ENCODE measurements at regions of chr5 and their contacts with region 1.

Region 1: GRCh38 chr5:172223901-172224873 is 30.2 kb downstream of the EFCAB9 start:
- DNase-seq: peak; percentile 95
- ATAC-seq: peak; percentile 90
- H3K4me3 ChIP-seq: 0 out of 2 replicates have a peak overlapping the region, but pooled peaks have one; percentile 5
- H3K27ac ChIP-seq: peak overlapping the region; percentile 94
- H3K4me1 ChIP-seq: peaks cover 25% of the 10 kb centered on the region
- H3K27me3 ChIP-seq: no peaks in the 10 kb centered on the region
- CTCF ChIP-seq: no peak
- EP300 ChIP-seq: no peak
- POLR2A ChIP-seq: no peak
- RAD21 ChIP-seq: no peak

Region 2: DNA sequence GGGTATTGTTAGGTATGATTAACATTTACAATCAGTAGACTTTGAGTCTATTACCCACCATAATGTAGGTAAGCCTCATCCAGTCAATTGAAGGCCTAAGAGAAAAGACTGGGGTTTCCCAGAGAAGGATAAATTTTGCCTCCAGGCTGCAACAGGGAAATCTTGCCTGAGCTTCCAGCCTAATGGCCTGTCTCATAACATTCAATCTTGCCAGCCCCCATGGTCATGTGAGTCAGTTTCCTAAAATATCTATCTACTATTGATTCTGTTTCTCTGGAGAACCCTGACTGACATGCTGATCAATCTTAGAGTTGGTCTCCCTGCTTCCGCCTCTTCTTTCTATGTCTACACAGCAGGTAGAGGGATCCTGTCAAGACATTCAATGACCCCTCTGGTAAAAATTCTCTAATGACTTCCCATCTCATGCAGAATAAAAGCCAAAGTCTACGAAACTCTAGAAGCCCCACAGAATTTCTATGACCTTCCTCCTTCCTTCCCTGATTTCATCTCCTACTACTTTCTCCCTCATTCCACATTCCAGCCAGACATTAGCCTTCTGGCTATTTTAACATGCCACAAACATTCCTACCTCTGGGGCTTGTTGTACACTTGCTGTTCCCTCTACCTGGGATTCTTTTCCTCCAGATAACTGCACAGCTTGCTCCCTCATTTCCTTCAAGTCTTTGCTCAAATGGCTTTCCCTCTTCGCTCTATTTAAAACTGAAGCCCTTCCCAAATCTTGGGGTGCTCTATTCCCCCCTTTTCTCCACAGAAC is 278.0 kb before region 1 on chr5:
- CTCF ChIA-PET with region 1: no interaction called
- POLR2A ChIA-PET with region 1: no interaction called
- RAD21 ChIA-PET with region 1: no interaction called
- SMC1A ChIA-PET with region 1: no interaction called
- in situ Hi-C with region 1: no loop called
- intact Hi-C with region 1: no loop called
- DNase-seq: no peak
- ATAC-seq: no peak
- H3K4me3 ChIP-seq: no peak overlapping the region
- H3K27ac ChIP-seq: no peak overlapping the region
- H3K4me1 ChIP-seq: peaks cover 6% of the 10 kb centered on the region; the same call in 1 of the 2 replicates
- H3K27me3 ChIP-seq: no peaks in the 10 kb centered on the region
- CTCF ChIP-seq: no peak
- EP300 ChIP-seq: no peak
- POLR2A ChIP-seq: no peak
- RAD21 ChIP-seq: no peak

Region 3: DNA sequence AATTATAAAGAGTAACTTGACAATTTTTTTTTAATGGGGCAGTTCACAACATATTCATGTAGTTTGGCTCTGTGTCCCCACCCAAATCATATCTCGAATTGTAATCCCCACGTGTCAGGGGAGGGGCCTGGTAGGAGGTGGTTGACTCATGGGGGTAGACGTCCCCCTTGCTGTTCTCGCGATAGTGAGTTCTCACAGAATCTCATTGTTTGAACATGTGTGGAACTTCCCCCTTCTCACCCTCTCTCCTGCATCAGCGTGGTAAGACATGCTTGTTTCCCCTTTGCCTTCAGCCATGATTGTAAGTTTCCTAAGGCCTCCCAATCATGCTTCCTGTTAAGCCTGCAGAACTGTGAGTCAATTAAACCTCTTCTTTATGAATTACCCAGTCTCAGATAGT is 258.4 kb before region 1 on chr5:
- CTCF ChIA-PET with region 1: no interaction called
- POLR2A ChIA-PET with region 1: no interaction called
- RAD21 ChIA-PET with region 1: no interaction called
- SMC1A ChIA-PET with region 1: no interaction called
- in situ Hi-C with region 1: no loop called
- intact Hi-C with region 1: no loop called
- DNase-seq: no peak
- ATAC-seq: 0 out of 3 replicates have a peak, but pooled peaks have one; percentile 4
- H3K4me3 ChIP-seq: no peak overlapping the region
- H3K27ac ChIP-seq: 0 out of 2 replicates have a peak overlapping the region, but pooled peaks have one; percentile 20
- H3K4me1 ChIP-seq: peaks cover 29% of the 10 kb centered on the region
- H3K27me3 ChIP-seq: no peaks in the 10 kb centered on the region
- CTCF ChIP-seq: no peak
- EP300 ChIP-seq: no peak
- POLR2A ChIP-seq: no peak
- RAD21 ChIP-seq: no peak

Region 4: GRCh38 chr5:172199446-172199845 is 24.7 kb before region 1 on chr5:
- CTCF ChIA-PET with region 1: no interaction called
- POLR2A ChIA-PET with region 1: interaction called, 10 read pairs
- RAD21 ChIA-PET with region 1: no interaction called
- SMC1A ChIA-PET with region 1: interaction called, 3 read pairs
- in situ Hi-C with region 1: no loop called
- intact Hi-C with region 1: no loop called
- DNase-seq: no peak
- ATAC-seq: no peak
- H3K4me3 ChIP-seq: no peak overlapping the region
- H3K27ac ChIP-seq: no peak overlapping the region
- H3K4me1 ChIP-seq: no peaks in the 10 kb centered on the region; the same call in 1 of the 2 replicates
- H3K27me3 ChIP-seq: no peaks in the 10 kb centered on the region
- CTCF ChIP-seq: no peak
- EP300 ChIP-seq: no peak
- POLR2A ChIP-seq: no peak
- RAD21 ChIP-seq: no peak

Region 5: DNA sequence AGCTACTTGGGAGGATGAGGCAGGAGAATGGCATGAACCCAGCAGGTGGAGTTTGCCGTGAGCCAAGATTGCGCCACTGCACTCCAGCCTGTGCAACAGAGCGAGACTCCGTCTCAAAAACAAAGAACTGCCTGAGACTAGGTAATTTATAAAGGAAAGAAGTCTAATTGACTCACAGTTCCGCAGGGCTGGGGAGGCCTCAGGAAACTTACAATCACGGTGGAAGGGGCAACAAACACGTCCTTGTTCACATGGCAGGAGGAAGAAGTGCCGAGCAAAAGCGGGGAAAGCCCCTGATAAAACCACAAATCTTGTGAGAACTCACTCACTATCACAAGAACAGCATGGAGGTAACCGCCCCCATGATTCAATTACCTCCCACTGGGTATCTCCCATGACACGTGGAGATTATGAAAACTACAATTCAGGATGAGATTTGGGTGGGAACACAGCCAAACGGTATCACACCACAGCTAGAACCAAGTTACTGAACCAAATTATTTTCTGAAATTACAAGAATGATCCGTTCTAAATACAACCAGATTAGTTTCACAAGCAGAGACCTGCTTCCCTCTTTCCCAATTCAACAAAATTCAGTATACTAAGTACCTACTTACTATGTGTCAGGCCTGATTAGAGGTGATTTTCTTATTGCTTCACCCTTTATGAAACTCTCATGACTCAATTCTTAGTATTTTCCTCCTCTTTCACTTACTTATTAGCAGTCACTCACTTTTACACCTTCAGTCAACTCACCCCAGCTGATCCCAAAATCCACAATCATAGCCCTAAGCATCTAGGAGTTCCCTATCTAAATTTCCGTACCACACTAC is 51.0 kb after region 1 on chr5:
- CTCF ChIA-PET with region 1: interaction called, 3 read pairs
- POLR2A ChIA-PET with region 1: no interaction called
- RAD21 ChIA-PET with region 1: no interaction called
- SMC1A ChIA-PET with region 1: interaction called, 3 read pairs
- in situ Hi-C with region 1: no loop called
- intact Hi-C with region 1: loop called (anchors 2 kb)
- DNase-seq: peak; percentile 55
- ATAC-seq: peak; percentile 79
- H3K4me3 ChIP-seq: peak overlapping the region; percentile 49; the same call in 1 of the 2 replicates
- H3K27ac ChIP-seq: peak overlapping the region; percentile 66
- H3K4me1 ChIP-seq: peaks cover 17% of the 10 kb centered on the region
- H3K27me3 ChIP-seq: no peaks in the 10 kb centered on the region
- CTCF ChIP-seq: no peak
- EP300 ChIP-seq: no peak
- POLR2A ChIP-seq: no peak
- RAD21 ChIP-seq: no peak

Region 6: DNA sequence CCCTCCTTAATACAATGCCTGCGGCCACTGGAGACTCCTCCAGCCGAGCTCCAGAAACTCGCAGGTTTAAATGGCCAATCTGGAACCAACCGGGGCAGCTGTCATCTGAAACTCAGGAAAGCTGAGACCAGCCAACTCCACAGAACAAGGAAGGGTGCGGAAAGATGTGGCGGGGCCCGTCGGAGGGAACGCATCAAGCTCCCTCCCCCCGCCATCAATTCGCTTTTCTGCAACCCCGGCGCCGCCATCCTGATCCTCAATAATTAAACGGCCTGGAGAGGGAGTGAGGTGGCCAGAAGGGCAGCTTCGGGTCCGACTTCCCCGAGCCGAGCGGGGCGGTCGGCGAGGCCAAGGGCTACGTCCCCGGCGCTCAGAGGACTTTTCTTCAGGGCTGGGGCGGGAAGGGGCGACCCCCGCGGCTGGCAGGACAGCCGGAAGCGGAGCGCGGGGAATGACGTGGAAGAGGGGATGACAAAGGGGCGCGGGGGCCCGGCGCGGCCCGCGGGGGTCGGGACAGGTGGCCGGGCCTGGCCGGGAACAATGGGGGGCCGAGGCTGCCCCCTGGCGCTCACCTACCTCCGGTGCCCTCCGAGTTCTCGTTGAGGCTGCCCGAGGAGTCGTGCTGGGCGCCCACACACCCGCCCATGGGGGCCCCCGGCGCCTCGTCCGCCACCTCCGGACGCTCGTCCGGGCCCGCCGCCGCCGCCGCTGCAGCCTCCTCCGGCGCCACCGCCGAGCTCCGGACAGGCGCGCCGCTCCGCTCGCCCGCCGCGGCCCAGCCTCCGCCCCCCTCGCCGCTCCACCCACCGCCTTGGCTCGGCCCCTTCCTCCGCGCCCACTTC is 59.1 kb after region 1 on chr5 and contains the start of gene UBTD2:
- CTCF ChIA-PET with region 1: interaction called, 13 read pairs
- POLR2A ChIA-PET with region 1: interaction called, 3 read pairs
- RAD21 ChIA-PET with region 1: interaction called, 3 read pairs
- SMC1A ChIA-PET with region 1: interaction called, 9 read pairs
- in situ Hi-C with region 1: no loop called
- intact Hi-C with region 1: loop called (anchors 2 kb)
- DNase-seq: no peak
- ATAC-seq: peak; percentile 83
- H3K4me3 ChIP-seq: peak within 1 kb of the TSS; percentile 99
- H3K27ac ChIP-seq: peak within 1 kb of the TSS; percentile 72
- H3K4me1 ChIP-seq: no peaks in the 10 kb centered on the region; the same call in 1 of the 2 replicates
- H3K27me3 ChIP-seq: no peaks in the 10 kb centered on the region
- CTCF ChIP-seq: peak; percentile 30 to 64 (median 57); a peak in 3 of 6 replicates
- EP300 ChIP-seq: no peak
- POLR2A ChIP-seq: no peak
- RAD21 ChIP-seq: peak; percentile 46
- polyA plus RNA-seq, gene UBTD2: 7.7 to 12.5 TPM

Region 7: GRCh38 chr5:172315587-172316493 is 91.7 kb after region 1 on chr5:
- CTCF ChIA-PET with region 1: no interaction called
- POLR2A ChIA-PET with region 1: no interaction called
- RAD21 ChIA-PET with region 1: interaction called, 3 read pairs
- SMC1A ChIA-PET with region 1: no interaction called
- in situ Hi-C with region 1: no loop called
- intact Hi-C with region 1: loop called (anchors 1 kb)
- DNase-seq: no peak
- ATAC-seq: peak; percentile 85
- H3K4me3 ChIP-seq: no peak overlapping the region
- H3K27ac ChIP-seq: peak overlapping the region; percentile 84
- H3K4me1 ChIP-seq: peaks cover 52% of the 10 kb centered on the region
- H3K27me3 ChIP-seq: no peaks in the 10 kb centered on the region
- CTCF ChIP-seq: no peak
- EP300 ChIP-seq: no peak
- POLR2A ChIP-seq: no peak
- RAD21 ChIP-seq: peak; percentile 10; the same call in 1 of the 2 replicates

Region 8: GRCh38 chr5:172389578-172390112 is 165.5 kb after region 1 on chr5:
- CTCF ChIA-PET with region 1: no interaction called
- POLR2A ChIA-PET with region 1: no interaction called
- RAD21 ChIA-PET with region 1: no interaction called
- SMC1A ChIA-PET with region 1: no interaction called
- in situ Hi-C with region 1: no loop called
- intact Hi-C with region 1: no loop called
- DNase-seq: no peak
- ATAC-seq: no peak
- H3K4me3 ChIP-seq: no peak overlapping the region
- H3K27ac ChIP-seq: no peak overlapping the region
- H3K4me1 ChIP-seq: no peaks in the 10 kb centered on the region
- H3K27me3 ChIP-seq: no peaks in the 10 kb centered on the region; a peak in 1 of 4 replicates
- CTCF ChIP-seq: no peak
- EP300 ChIP-seq: no peak
- POLR2A ChIP-seq: no peak
- RAD21 ChIP-seq: no peak

Region 9: GRCh38 chr5:172583931-172584511 is 359.8 kb after region 1 on chr5:
- CTCF ChIA-PET with region 1: no interaction called
- POLR2A ChIA-PET with region 1: no interaction called
- RAD21 ChIA-PET with region 1: no interaction called
- SMC1A ChIA-PET with region 1: no interaction called
- in situ Hi-C with region 1: no loop called
- intact Hi-C with region 1: no loop called
- DNase-seq: no peak
- ATAC-seq: no peak
- H3K4me3 ChIP-seq: no peak overlapping the region
- H3K27ac ChIP-seq: no peak overlapping the region
- H3K4me1 ChIP-seq: no peaks in the 10 kb centered on the region
- H3K27me3 ChIP-seq: peaks cover 0 to 7% of the 10 kb centered on the region in 2 experiments; a peak in 2 of 4 replicates
- CTCF ChIP-seq: no peak
- EP300 ChIP-seq: no peak
- POLR2A ChIP-seq: no peak
- RAD21 ChIP-seq: no peak

Measured in GM12878 (cell line).